Left ventricle myocardium inferior (tissue), 1 donor: ENCODE measurements at regions of chr6 and their contacts with region 1.

Region 1: DNA sequence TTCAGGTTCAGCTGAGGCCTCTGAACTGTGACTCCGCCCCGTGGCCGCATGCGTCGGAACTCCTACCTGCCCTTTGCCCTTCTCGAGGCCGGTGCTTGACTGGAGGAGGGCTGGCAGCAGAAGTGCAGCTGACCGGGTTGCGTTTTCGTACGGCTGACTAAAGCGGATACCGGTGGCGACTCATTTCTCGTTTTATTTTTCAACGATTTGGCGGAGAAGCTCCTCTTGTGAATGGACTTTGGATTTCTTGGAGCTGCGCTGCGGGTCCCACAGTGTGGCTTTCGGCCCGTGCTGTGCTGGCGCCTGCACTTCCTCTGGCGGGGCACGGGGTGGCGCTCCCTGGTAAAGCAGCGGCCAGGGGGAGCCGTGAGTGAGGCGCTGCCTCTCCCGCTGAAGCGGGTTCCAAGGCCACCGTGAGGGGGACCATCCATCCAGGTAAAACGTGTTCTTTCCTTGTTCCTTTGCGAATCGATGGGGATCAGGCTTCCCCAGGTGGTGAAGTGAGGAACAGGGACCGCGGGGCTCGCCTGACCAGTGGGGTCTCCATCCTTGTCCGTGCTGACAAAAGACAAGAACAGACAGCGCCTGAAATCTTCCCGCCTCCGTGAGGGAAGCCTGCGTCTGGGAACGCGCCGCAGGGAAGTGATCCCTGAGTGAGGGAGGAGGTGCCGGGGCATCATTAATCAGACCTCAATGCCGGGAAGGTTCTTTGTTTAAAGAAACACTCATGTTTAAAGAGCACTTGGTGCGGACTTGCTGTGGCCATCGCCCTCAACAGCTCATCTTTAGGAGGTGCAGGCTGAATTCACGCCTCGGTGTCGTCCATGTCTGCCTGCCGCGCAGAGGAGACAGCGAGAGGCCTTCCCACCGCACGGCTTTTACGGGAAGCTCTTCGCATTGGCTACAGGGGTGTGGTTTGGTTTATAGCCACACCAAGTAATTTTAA is 38.8 kb downstream of the ERMARD start:
- DNase-seq: peak; percentile 62
- H3K4me3 ChIP-seq: peak overlapping the region; percentile 67
- H3K27ac ChIP-seq: peak overlapping the region; percentile 55
- H3K4me1 ChIP-seq: peaks cover 17% of the 10 kb centered on the region
- H3K27me3 ChIP-seq: peaks cover 26% of the 10 kb centered on the region
- CTCF ChIP-seq: peak; percentile 98

Region 2: GRCh38 chr6:170529839-170530469 is 739.7 kb after region 1 on chr6:
- intact Hi-C with region 1: loop called (anchors 5 kb)
- DNase-seq: peak; percentile 70
- H3K4me3 ChIP-seq: no peak overlapping the region
- H3K27ac ChIP-seq: no peak overlapping the region
- H3K4me1 ChIP-seq: peaks cover 4% of the 10 kb centered on the region
- H3K27me3 ChIP-seq: no peaks in the 10 kb centered on the region
- CTCF ChIP-seq: peak; percentile 94